ENCODE measurements at regions of chr19 and their contacts with region 1.

Region 1: DNA sequence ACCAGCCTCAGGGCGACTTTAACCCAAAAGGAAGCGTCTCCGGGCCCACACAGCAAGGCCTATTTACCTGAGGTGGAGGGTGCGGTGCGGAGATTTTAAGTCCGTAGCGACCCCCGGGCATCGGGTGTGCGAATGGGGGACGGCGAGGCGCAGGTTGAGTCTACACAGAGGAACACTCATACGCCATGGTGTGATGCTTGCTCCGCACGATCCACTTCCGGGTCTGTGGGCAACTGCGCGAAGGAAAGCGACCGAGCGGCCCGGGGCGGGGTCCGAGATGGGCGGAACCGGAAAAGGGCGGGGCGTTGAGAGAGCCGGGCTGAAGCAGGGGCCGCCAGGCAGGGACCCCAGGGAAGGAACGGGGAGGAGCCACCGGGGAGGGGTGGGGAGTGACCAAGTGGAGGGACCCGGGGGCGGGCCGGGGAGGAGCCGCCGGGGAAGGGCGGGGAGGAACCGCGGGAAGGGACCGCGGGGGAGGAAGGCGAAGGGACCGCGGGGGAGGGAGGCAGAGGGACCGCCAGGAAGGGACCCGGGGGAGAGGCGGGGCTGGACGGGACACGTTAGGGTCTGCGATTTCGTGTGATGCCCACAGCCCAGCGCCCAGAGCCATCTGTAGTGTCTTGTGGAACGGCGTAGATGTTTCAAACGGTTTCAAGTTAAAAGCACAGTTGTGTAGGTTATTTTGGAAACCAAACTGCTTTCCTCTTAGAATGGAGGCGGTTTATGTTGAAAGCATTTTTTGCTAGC is at the start of gene ZNF160:
- DNase-seq: peak; percentile 97
- ATAC-seq: peak; percentile 97 to 98
- H3K4me3 ChIP-seq: peak within 1 kb of the TSS; percentile 81 to 98 (median 95)
- H3K27ac ChIP-seq: peak within 1 kb of the TSS; percentile 88 to 94 (median 91)
- H3K4me1 ChIP-seq: peaks cover 13 to 17% of the 10 kb centered on the region in 2 donors
- H3K27me3 ChIP-seq: no peaks in the 10 kb centered on the region
- CTCF ChIP-seq: no peak
- POLR2A ChIP-seq: peak; percentile 83 to 86
- total RNA-seq, gene ZNF160: 8.3 to 20.7 (median 11.9) TPM

Region 2: GRCh38 chr19:52535771-52536447 is 567.5 kb before region 1 on chr19:
- in situ Hi-C with region 1: no loop called
- intact Hi-C with region 1: loop called (anchors 10 kb)
- DNase-seq: peak; percentile 68 to 79
- ATAC-seq: peak; percentile 69 to 80
- H3K4me3 ChIP-seq: peak overlapping the region; percentile 59 to 74 (median 70)
- H3K27ac ChIP-seq: peak overlapping the region; percentile 69 to 88 (median 82)
- H3K4me1 ChIP-seq: peaks cover 25% of the 10 kb centered on the region in 2 donors
- H3K27me3 ChIP-seq: no peaks in the 10 kb centered on the region
- CTCF ChIP-seq: peak in 2 of 5 experiments; percentile 39 to 47
- POLR2A ChIP-seq: peak; percentile 32 to 44

Region 3: DNA sequence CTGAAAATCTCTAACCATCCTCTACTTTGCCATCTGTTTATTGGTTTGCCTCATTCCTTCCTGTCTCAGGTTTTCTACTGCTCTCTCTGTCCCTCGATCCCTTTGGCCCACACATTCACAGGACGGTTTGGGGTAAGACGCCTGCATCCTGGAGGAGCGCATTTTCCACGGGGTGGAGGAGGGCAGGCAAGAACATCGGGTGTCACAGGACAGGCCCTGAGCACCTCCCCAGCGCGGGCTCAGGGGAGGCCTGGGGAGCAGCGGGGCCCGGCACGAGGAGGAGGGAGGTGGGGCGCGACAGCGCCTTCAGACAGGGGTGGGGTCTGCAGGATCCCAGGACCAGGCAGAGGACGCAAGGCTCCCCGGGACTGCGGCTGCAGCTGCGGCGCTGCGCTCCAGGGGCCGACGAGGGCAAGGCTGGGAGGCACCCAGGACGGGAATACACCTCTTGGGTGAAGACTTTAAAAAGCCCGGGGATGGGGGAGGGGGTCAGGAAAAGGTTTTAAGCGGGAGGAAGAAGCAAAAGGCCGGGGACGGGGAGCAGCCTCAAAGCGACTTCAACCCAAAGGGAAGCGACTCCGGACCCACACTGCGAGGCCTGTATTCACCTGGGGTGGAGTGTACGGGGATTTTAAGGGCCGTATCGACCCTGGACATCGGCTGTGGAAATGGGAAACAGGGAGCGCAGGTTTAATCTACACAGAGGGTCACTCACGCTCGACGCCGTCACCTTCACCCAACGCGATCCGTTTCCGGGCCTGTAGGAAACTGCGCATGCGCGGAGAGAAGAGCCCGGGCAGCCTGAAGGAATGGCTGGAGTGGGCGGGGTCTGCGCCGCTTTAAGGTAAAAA is 29.0 kb after region 1 on chr19 and contains the start of gene ZNF415:
- in situ Hi-C with region 1: no loop called
- intact Hi-C with region 1: loop called (anchors 2 kb)
- DNase-seq: peak; percentile 50 to 60
- ATAC-seq: peak; percentile 62 to 91
- H3K4me3 ChIP-seq: peak within 1 kb of the TSS; percentile 62 to 79 (median 72)
- H3K27ac ChIP-seq: peak within 1 kb of the TSS; percentile 81 to 85 (median 83)
- H3K4me1 ChIP-seq: peaks cover 10 to 15% of the 10 kb centered on the region in 2 donors
- H3K27me3 ChIP-seq: peaks cover 0 to 5% (median 0%) of the 10 kb centered on the region in 3 donors
- CTCF ChIP-seq: no peak
- POLR2A ChIP-seq: peak; percentile 41 to 61
- total RNA-seq, gene ZNF415: 1.6 to 4.0 (median 3.7) TPM

Region 4: GRCh38 chr19:53158119-53158656 is 54.8 kb after region 1 on chr19:
- in situ Hi-C with region 1: no loop called
- intact Hi-C with region 1: loop called (anchors 1 kb)
- DNase-seq: peak in 1 of 2 donors; percentile 12
- ATAC-seq: peak; percentile 26 to 40
- H3K4me3 ChIP-seq: peak overlapping the region; percentile 61 to 82 (median 70)
- H3K27ac ChIP-seq: peak overlapping the region; percentile 60 to 79 (median 77)
- H3K4me1 ChIP-seq: peaks cover 0 to 17% of the 10 kb centered on the region in 2 donors
- H3K27me3 ChIP-seq: no peaks in the 10 kb centered on the region
- CTCF ChIP-seq: no peak
- POLR2A ChIP-seq: no peak